ENCODE measurements at regions of chr4 and their contacts with region 1.

Region 1: DNA sequence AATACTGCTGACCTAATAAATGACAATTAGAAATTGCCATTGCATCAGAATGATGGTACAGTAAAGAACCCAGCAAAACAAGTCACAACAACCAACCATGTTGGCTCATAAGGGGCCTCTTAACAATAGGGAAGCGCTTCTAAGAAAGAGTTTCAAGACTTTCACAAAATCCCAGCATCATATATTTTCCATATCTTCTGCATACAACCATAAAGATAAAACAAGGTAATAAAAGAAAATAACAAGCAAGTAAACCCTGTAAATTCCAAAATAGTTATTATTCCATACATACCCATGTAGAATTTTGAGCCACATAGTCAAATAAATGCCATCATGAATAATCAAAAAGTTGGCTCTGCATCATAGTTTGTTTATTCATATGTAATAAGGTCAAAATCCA is 8.2 kb downstream of the SLC10A7 start:
- DNase-seq: no peak

Region 2: GRCh38 chr4:146222313-146222712 is 291.2 kb before region 1 on chr4:
- intact Hi-C with region 1: no loop called
- DNase-seq: no peak

Region 3: GRCh38 chr4:146472404-146472803 is 41.1 kb before region 1 on chr4:
- intact Hi-C with region 1: loop called in 1 of 2 experiments (anchors 2 kb)
- DNase-seq: no peak

Measured in posterior vena cava (tissue), 2 donors.